ENCODE measurements at regions of chr16 and their contacts with region 1.

Region 1: GRCh38 chr16:21574381-21574780 is 25.0 kb upstream of the METTL9 start:
- ATAC-seq: no peak
- H3K4me3 ChIP-seq: no peak overlapping the region
- H3K27ac ChIP-seq: no peak overlapping the region
- H3K4me1 ChIP-seq: no peaks in the 10 kb centered on the region

Region 2: GRCh38 chr16:21197112-21197511 is 377.3 kb before region 1 on chr16:
- in situ Hi-C with region 1: no loop called
- ATAC-seq: no peak
- H3K4me3 ChIP-seq: no peak overlapping the region
- H3K27ac ChIP-seq: no peak overlapping the region
- H3K4me1 ChIP-seq: no peaks in the 10 kb centered on the region

Region 3: DNA sequence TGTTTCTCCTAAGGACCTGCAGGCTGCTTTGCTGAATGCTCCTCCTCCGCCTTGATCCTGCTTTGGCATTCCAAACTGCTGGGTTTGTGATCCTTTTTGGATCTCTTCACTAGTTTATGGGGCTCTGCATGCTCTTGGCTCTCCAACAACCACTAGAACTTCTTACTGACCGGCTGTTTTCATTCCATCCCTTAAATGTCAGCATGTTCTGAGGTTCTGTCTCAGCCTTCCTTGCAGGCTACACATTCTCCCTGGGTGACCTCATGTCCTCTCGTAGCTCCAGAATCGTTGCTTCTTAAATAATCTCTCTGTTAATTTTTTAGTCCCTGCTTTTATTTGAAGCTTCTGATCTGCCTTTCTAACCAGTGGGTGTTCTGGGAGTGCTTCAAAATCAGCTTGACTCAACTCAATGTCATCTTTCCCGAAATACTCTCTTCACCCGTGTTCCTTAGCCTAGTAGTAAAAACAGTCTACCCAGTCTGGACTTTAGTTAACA is 1120.6 kb after region 1 on chr16:
- in situ Hi-C with region 1: loop called in 4 of 9 experiments (anchors 5 to 10 kb)
- ATAC-seq: peak in 2 of 8 experiments; percentile 61 to 68
- H3K4me3 ChIP-seq: no peak overlapping the region
- H3K27ac ChIP-seq: no peak overlapping the region
- H3K4me1 ChIP-seq: peaks cover 3 to 7% of the 10 kb centered on the region in 2 donors